ENCODE measurements at regions of chrX and their contacts with region 1.

Region 1: DNA sequence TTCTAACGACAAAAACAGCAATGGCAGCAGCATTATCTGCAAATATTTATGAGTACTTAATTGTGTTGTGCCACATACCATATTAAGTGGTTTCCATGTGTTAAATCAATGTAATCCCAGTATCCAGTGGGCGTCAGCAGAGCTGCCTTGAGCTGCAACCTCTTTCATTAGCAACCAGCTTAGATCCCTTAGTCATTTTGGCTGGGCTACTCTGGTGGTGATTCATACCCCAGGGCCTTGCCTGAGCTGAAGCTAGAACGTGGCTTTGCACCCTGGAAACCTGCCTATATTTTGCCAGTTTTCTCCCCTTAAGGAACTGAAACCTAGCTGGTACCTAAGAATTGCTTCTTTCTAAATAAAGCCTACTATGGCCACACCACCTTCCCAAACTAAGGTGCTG is 474.3 kb upstream of the FTHL17 start:
- DNase-seq: peak; percentile 60
- H3K4me3 ChIP-seq: no peak overlapping the region
- H3K27ac ChIP-seq: peak overlapping the region; percentile 59
- H3K4me1 ChIP-seq: peaks cover 14% of the 10 kb centered on the region
- H3K27me3 ChIP-seq: no peaks in the 10 kb centered on the region
- CTCF ChIP-seq: no peak
- POLR2A ChIP-seq: no peak

Region 2: DNA sequence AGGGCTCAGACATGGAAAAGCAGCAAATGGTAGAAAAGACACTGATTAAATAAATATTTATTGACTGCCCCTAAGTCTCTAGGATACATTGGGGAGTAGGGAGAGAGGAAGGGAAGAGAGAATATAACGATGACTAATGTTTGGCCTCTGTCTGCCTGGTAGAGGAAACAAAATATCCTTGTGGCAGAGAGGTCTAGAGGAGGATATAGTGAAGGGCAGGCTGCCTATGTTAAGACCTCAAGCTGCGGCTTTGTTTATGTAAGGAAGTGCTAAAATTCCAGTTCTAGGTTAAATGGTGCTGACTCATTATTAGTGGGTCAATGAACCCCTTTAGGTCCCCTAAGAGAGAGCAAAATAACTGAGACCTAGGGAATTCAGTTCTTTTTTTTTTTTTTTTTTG is 47.0 kb before region 1 on chrX:
- CTCF ChIA-PET with region 1: no interaction called
- POLR2A ChIA-PET with region 1: no interaction called
- dilution Hi-C with region 1: no loop called
- intact Hi-C with region 1: loop called (anchors 1 kb)
- DNase-seq: peak; percentile 85
- H3K4me3 ChIP-seq: no peak overlapping the region
- H3K27ac ChIP-seq: peak overlapping the region; percentile 53
- H3K4me1 ChIP-seq: peaks cover 22% of the 10 kb centered on the region
- H3K27me3 ChIP-seq: no peaks in the 10 kb centered on the region
- CTCF ChIP-seq: no peak
- POLR2A ChIP-seq: peak; percentile 41

Region 3: DNA sequence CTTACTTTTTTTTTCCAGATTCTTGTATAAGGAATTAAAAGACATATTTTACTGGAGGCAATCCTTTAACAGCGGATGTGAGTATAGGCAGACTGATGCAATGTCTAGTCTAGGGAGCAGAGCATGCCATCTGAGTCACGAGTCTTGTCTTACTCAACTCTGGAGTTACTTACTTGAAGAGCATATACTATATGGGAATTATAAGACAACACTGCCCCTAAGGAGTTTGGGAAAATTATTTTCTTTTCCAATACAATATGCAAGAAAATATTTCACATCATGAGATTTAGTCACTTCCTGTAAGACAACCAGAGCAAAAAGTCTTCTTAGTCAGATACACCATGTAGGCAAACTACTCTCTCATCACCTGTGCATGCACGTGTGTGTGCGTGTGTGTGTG is 63.0 kb after region 1 on chrX:
- CTCF ChIA-PET with region 1: no interaction called
- POLR2A ChIA-PET with region 1: no interaction called
- dilution Hi-C with region 1: no loop called
- intact Hi-C with region 1: no loop called
- DNase-seq: peak; percentile 12
- H3K4me3 ChIP-seq: no peak overlapping the region
- H3K27ac ChIP-seq: no peak overlapping the region
- H3K4me1 ChIP-seq: no peaks in the 10 kb centered on the region
- H3K27me3 ChIP-seq: no peaks in the 10 kb centered on the region
- CTCF ChIP-seq: no peak
- POLR2A ChIP-seq: no peak

Measured in endothelial cell of umbilical vein (primary cell).